GM18951 (cell line): ENCODE measurements at regions of chr17 and their contacts with region 1.

Region 1: DNA sequence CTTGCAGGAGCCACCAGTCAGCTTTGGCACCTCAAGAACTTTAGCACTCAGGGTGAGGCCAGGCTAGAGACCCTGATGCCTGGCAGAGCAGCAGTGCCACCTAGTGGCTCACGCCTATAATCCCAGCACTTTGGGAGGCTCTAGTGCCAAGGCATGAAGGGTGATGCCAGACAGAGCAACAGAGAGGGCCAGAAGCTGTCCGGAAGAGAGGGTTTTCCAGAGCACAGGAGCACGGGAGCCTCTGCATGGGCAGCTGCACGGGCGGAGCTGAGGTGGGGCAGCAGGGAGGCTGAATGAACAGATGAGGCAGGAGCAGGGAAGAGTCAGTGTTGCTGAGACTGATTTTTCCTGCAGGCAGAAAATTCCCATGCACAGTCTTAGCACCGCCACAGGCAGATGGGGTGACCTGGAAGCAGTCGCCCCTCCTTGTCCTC is 38.9 kb downstream of the MYH3 start:
- POLR2A ChIP-seq: no peak

Region 2: GRCh38 chr17:9924735-9925191 is 693.5 kb before region 1 on chr17:
- in situ Hi-C with region 1: loop called (anchors 25 kb)
- POLR2A ChIP-seq: no peak

Region 3: GRCh38 chr17:10271106-10271562 is 347.1 kb before region 1 on chr17:
- in situ Hi-C with region 1: no loop called
- POLR2A ChIP-seq: no peak

Region 4: DNA sequence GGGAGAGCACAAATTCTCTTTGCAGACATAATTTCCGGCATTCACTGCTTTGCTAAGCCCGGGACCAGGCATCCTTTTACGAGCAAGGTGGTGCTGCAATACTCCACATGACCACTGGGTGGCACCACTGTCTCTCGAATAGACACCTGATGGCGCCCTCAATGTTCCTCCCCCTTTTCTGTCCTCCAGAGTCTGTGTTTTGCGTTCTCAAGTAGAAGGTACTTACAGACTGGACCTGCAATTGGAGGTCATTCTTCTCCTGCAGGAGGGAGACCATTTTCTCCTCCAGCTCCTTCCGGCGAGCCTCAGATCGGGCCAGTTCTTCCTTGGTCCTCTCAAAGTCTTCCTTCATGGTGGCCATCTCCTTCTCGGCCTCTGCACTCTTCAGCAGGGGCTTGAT is 290.6 kb before region 1 on chr17:
- in situ Hi-C with region 1: loop called (anchors 10 kb)
- POLR2A ChIP-seq: no peak

Region 5: DNA sequence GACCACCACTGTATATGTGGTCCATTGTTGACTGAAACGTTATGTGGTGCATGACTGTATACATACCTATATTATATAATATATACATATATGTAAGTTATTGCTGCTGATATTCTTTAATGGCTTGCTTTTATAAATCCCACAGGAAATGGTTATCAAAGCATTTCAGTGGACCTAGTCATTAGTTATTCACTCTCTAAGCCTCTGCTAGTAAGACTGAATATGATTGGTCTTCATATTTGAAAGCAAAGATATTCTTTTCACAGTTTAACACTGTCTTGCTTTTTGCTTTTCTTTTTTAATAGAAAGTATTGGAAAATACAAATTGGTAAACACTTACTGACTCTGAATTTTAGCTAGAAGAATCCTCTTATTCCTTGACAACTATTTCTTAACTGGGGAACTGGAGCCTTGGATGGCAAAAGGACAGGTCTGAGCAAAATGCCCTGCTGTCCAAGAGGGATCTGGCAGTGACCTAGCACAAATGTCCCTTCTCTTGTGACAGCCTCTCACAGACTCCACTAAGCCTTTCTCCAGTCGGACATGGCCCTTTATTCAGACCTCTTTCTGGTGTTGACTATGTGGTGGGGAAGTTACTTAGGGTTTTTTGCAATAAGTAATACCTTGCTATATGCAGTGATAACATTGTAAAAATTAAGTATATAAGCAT is 54.1 kb before region 1 on chr17:
- in situ Hi-C with region 1: no loop called
- POLR2A ChIP-seq: no peak